ENCODE measurements at regions of chr2 and their contacts with region 1.

Region 1: DNA sequence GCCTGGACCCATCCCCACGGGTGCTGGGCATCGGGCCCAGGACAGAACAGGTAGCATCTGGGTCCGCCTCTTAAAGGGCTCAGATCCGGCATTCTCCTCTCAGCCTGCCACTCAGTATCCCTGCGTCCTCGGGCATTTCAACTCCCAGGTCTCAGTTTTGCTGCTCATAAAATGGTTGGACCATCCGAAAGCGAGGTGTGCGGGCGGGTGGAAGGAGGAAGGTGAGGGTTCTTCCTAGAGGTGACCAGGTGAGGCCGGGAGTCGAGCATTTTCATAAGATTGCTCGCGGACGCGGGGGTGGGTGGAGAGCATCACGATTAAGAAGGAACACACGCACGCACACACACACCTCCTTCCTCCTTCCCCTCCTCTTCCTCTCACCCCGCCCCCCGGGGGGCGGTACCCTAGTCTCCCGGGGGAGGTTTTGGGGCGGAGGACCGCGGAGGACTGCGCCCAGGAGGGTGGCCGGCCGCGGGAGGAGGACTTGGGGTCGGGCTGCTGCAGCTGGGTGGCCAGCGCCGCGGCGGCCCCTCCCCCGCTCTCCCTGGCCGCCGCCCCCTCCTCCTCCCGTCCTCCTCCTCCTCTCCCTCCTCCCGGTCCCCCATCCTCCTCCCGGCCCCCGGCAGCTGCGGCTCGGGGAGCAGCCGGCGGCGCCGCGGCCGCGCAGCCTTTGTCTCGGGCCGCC is 97.9 kb upstream of the GPR45 start:
- DNase-seq: no peak

Region 2: DNA sequence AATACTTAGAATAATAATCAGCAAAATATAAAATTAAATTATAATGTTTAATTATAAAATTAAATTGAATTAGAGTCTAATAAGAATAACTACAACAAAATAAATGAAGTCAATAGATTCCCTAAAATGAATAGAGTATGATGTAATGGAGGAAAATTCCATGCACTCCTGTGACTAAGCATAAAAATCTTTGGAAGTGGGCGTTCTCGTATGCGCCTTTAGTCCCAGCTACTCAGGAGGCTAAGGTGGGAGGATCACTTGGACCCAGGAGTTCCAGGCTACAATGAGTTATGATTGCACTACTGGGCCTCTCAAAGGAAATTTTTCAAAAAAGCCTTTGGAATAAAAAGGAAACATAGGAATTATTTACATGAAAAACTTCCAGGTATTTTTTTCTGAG is 1245.0 kb before region 1 on chr2:
- intact Hi-C with region 1: no loop called
- DNase-seq: no peak

Region 3: DNA sequence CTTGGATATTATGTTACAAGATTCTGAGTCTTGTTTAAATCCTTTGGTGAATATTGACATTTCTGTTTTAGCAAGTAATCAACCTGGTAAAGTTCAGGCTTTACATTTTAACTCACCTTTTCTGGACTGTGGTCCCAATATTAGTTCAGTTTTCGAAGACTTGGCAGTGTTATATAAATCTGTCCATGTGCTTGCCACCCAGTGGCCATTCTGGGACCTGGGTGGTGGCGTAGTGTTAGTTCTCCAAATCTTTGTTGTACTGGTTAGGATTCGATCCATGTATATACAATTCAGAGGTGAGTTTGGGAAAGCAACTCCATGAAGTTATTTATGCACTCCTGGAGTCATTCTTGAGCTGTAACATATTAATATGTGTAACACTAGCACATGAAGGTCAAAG is 957.2 kb before region 1 on chr2:
- intact Hi-C with region 1: loop called in 1 of 2 experiments (anchors 5 kb)
- DNase-seq: no peak